H1 (cell line): ENCODE measurements at regions of chr17 and their contacts with region 1.

Region 1: GRCh38 chr17:27879987-27880608 is 13.1 kb downstream of the LYRM9 start:
- DNase-seq: peak; percentile 43 to 87
- H3K4me3 ChIP-seq: no peak overlapping the region
- H3K27ac ChIP-seq: no peak overlapping the region
- H3K4me1 ChIP-seq: no peaks in the 10 kb centered on the region; a peak in 1 of 7 replicates
- H3K27me3 ChIP-seq: 0 out of 7 replicates have a peak, but pooled peaks cover 0 to 2% (median 0%) of the 10 kb centered on the region in 4 experiments
- CTCF ChIP-seq: peak; percentile 95 to 100 (median 97)
- EP300 ChIP-seq: no peak
- POLR2A ChIP-seq: no peak
- RAD21 ChIP-seq: peak; percentile 99

Region 2: GRCh38 chr17:27630607-27631410 is 249.3 kb before region 1 on chr17 and contains the start of gene LGALS9:
- CTCF ChIA-PET with region 1: no interaction called
- POLR2A ChIA-PET with region 1: no interaction called
- DNase-seq: no peak
- H3K4me3 ChIP-seq: no peak within 1 kb of the TSS
- H3K27ac ChIP-seq: no peak within 1 kb of the TSS
- H3K4me1 ChIP-seq: peaks cover 0 to 4% (median 0%) of the 10 kb centered on the region in 4 experiments; a peak in 2 of 7 replicates
- H3K27me3 ChIP-seq: no peaks in the 10 kb centered on the region
- CTCF ChIP-seq: no peak
- EP300 ChIP-seq: no peak
- POLR2A ChIP-seq: no peak
- RAD21 ChIP-seq: no peak
- total RNA-seq, gene LGALS9: 0.77 and 1.7 TPM in 2 replicates

Region 3: GRCh38 chr17:27771586-27771985 is 108.5 kb before region 1 on chr17:
- CTCF ChIA-PET with region 1: interaction called, 52 read pairs
- POLR2A ChIA-PET with region 1: no interaction called
- DNase-seq: no peak
- H3K4me3 ChIP-seq: no peak overlapping the region
- H3K27ac ChIP-seq: no peak overlapping the region
- H3K4me1 ChIP-seq: peaks cover 0 to 6% (median 0%) of the 10 kb centered on the region in 4 experiments; a peak in 1 of 7 replicates
- H3K27me3 ChIP-seq: no peaks in the 10 kb centered on the region
- CTCF ChIP-seq: no peak
- EP300 ChIP-seq: no peak
- POLR2A ChIP-seq: no peak
- RAD21 ChIP-seq: no peak

Region 4: GRCh38 chr17:27793168-27793905 is 86.8 kb before region 1 on chr17:
- CTCF ChIA-PET with region 1: interaction called, 109 read pairs
- POLR2A ChIA-PET with region 1: interaction called, 4 read pairs
- DNase-seq: peak in 1 of 2 experiments; percentile 67
- H3K4me3 ChIP-seq: peak overlapping the region; percentile 36 to 60 (median 41)
- H3K27ac ChIP-seq: no peak overlapping the region
- H3K4me1 ChIP-seq: peaks cover 0 to 3% (median 1%) of the 10 kb centered on the region in 4 experiments; a peak in 3 of 7 replicates
- H3K27me3 ChIP-seq: peaks cover 0 to 24% (median 19%) of the 10 kb centered on the region in 4 experiments; a peak in 6 of 7 replicates
- CTCF ChIP-seq: no peak
- EP300 ChIP-seq: no peak
- POLR2A ChIP-seq: no peak
- RAD21 ChIP-seq: no peak

Region 5: GRCh38 chr17:27818401-27819105 is 61.5 kb before region 1 on chr17:
- CTCF ChIA-PET with region 1: interaction called, 17 read pairs
- POLR2A ChIA-PET with region 1: no interaction called
- DNase-seq: no peak
- H3K4me3 ChIP-seq: no peak overlapping the region
- H3K27ac ChIP-seq: no peak overlapping the region
- H3K4me1 ChIP-seq: no peaks in the 10 kb centered on the region
- H3K27me3 ChIP-seq: no peaks in the 10 kb centered on the region
- CTCF ChIP-seq: no peak
- EP300 ChIP-seq: no peak
- POLR2A ChIP-seq: no peak
- RAD21 ChIP-seq: no peak

Region 6: DNA sequence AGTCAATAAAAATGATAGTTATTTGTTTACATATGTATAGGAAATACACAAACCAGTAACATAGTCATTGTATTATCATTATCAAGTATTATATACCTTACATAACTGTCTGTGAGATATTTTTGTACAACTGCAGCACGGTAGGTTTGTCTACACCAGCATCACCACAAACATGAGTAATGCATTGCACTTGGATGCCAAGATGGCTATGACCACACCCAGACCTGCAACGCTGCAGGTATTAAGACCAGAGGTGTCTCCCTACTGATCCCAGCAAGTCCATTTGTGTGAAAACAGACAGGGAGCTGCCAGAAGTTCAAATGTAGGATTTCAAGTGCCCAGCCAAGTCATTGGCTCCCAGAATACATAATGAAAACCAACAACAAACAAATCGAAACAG is 45.5 kb before region 1 on chr17:
- CTCF ChIA-PET with region 1: interaction called, 18 read pairs
- POLR2A ChIA-PET with region 1: no interaction called
- DNase-seq: no peak
- H3K4me3 ChIP-seq: no peak overlapping the region
- H3K27ac ChIP-seq: no peak overlapping the region
- H3K4me1 ChIP-seq: peaks cover 0 to 3% (median 0%) of the 10 kb centered on the region in 4 experiments; a peak in 1 of 7 replicates
- H3K27me3 ChIP-seq: no peaks in the 10 kb centered on the region
- CTCF ChIP-seq: no peak
- EP300 ChIP-seq: no peak
- POLR2A ChIP-seq: no peak
- RAD21 ChIP-seq: no peak

Region 7: DNA sequence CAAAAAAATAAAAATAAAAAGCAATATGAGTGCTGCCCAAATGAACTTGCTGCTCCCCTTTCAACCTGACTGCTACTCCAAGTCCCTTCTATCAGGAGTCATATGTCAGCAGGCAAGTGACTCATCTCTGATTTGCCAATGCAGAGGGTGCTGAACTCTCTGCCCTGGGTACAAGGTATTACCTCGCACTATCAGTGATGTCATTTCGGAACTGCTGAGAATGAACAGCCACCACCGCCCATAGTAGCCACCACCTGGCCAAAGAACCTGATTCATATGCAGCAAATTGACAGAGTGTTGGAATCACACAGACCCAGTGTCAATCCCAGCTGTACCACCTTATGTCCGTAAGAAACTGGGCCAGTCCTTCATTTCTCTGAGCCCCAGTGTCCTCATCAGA is 18.1 kb before region 1 on chr17:
- CTCF ChIA-PET with region 1: interaction called, 21 read pairs
- POLR2A ChIA-PET with region 1: no interaction called
- DNase-seq: no peak
- H3K4me3 ChIP-seq: no peak overlapping the region
- H3K27ac ChIP-seq: no peak overlapping the region
- H3K4me1 ChIP-seq: peaks cover 2 to 4% (median 2%) of the 10 kb centered on the region in 4 experiments; a peak in 5 of 7 replicates
- H3K27me3 ChIP-seq: no peaks in the 10 kb centered on the region
- CTCF ChIP-seq: no peak
- EP300 ChIP-seq: no peak
- POLR2A ChIP-seq: no peak
- RAD21 ChIP-seq: no peak

Region 8: GRCh38 chr17:27956601-27957445 is 76.7 kb after region 1 on chr17:
- CTCF ChIA-PET with region 1: no interaction called
- POLR2A ChIA-PET with region 1: no interaction called
- DNase-seq: no peak
- H3K4me3 ChIP-seq: no peak overlapping the region
- H3K27ac ChIP-seq: no peak overlapping the region
- H3K4me1 ChIP-seq: peaks cover 2 to 18% (median 12%) of the 10 kb centered on the region in 4 experiments
- H3K27me3 ChIP-seq: no peaks in the 10 kb centered on the region
- CTCF ChIP-seq: no peak
- EP300 ChIP-seq: no peak
- POLR2A ChIP-seq: no peak
- RAD21 ChIP-seq: no peak